ENCODE measurements at regions of chr1 and their contacts with region 1.

Region 1: DNA sequence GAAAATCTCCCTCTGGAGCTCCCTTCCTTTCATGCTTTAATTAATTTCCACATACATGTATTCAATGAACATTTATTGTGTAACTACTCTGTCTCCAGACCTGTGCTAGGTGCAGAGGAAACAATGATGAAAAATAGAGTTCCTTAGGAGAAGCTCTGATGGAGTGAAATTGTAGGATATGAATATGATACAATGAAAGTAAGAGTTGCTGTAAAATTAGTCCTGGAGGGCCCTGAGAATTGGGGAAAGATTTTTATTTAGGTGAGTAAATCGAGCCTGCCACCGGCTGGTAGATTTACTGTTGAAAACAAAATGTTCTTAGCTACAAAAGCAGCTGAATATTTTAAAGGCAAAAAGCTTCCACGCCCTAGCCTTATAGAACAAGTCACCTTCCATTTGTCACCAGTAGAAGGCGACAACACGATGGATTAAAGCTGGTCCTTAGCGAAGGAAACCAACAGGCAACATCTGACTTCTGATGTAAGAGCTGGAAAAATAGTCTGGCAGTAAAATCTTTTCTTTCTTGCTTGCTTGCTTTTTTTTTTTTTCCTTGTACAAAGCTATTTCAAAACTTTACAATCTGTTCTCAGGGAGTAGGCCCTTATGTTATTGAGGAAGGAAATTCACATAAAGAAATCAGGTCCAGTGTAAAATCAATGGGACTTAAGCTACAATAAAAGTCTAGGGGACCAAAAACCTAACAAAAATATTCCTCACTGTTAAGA is 82.0 kb upstream of the ROR1 start:
- DNase-seq: peak; percentile 60
- CTCF ChIP-seq: peak; percentile 79

Region 2: GRCh38 chr1:63659448-63659847 is 32.4 kb before region 1 on chr1:
- CTCF ChIA-PET with region 1: interaction called, 11 read pairs
- POLR2A ChIA-PET with region 1: no interaction called
- DNase-seq: no peak
- CTCF ChIP-seq: no peak

Region 3: DNA sequence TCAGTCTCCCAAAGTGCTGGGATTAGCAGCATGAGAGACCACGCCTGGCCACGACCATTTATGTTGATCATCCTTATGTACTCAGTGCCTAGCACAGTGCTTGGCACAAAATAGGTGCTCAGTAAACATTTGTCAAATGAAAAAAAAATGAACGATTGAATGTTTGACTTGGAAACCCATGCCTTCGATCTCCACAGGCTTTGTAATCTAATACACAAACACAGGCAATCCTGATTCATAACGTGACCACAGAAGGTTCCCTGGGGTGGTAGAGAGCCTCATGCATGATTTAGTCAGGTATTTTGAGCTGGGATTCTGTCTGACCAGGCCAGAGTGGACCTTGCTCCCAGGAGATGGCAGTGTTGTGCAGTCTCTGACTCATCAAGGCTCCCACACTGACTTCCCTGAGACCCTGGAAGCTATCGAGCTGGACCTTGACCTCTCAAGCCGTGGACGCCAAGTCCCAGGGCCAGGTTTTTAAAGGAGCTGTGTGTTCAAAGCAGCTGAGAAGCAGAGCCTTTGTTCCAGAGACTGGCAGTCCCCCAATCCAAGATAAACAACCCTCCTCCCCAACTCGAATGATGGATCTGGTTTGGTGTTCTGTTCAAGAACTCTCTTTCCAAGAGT is 17.5 kb before region 1 on chr1:
- CTCF ChIA-PET with region 1: interaction called, 15 read pairs
- POLR2A ChIA-PET with region 1: no interaction called
- DNase-seq: peak; percentile 54
- CTCF ChIP-seq: peak; percentile 61

Region 4: DNA sequence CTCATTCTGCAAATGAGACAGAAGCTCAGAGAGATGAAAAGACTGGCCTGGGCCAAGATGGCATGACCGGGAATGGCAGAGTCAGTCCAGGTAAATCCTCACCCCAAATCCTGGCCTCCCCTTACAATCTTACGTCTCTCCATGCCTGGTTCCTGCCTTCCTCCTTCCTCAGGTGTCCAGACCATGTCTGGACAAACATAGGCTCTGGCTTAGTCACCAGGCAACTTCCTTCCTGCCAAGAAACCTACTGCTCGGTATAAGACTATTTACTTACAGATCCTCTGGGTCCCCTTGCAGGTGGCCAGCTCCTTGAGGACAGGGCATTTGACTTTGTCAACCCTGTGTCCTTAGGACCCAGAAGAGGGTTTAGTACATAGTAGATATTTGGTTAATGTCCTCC is 12.6 kb after region 1 on chr1:
- CTCF ChIA-PET with region 1: interaction called, 14 read pairs
- POLR2A ChIA-PET with region 1: no interaction called
- DNase-seq: no peak
- CTCF ChIP-seq: no peak

Region 5: DNA sequence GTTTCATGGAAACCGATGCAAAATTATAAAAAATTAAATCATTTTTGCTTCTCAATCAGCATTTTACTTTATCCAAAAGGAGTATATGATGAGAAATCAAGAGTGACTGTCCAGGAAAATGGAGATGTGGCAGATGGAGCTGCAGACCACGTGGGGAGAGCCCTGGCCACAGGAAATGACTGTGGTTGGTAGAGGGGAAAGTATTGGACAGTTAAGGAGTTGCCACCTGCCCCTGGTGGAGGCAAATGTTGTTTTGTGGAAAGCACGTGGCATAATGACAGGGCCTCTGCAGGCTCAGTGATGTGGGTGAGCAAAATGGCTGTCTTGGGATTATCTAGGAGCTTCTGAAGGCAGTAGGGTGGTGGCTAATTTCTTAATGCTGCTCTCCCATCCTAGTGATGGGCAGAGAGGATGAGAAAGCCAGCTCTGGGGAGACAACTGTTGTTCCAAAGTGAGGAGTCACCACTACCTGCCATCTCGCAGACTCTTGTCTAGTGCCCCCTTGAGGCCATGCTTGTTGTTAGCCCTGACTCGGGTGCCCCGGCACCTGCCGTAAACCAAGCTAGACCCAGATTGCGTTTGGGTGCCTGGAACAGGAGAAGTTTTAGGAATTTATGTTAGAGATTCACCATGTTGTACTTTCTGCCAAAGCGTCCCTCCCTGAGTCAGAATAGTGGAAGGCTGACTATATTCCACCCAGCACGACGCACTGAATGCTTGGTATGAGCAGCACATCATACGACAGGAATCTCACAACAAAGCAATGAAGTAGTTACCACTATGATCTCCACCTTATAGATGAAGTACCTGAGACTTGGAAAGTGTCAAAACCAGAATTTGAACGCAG is 225.9 kb after region 1 on chr1:
- CTCF ChIA-PET with region 1: interaction called, 21 read pairs
- POLR2A ChIA-PET with region 1: no interaction called
- DNase-seq: no peak
- CTCF ChIP-seq: no peak

Region 6: DNA sequence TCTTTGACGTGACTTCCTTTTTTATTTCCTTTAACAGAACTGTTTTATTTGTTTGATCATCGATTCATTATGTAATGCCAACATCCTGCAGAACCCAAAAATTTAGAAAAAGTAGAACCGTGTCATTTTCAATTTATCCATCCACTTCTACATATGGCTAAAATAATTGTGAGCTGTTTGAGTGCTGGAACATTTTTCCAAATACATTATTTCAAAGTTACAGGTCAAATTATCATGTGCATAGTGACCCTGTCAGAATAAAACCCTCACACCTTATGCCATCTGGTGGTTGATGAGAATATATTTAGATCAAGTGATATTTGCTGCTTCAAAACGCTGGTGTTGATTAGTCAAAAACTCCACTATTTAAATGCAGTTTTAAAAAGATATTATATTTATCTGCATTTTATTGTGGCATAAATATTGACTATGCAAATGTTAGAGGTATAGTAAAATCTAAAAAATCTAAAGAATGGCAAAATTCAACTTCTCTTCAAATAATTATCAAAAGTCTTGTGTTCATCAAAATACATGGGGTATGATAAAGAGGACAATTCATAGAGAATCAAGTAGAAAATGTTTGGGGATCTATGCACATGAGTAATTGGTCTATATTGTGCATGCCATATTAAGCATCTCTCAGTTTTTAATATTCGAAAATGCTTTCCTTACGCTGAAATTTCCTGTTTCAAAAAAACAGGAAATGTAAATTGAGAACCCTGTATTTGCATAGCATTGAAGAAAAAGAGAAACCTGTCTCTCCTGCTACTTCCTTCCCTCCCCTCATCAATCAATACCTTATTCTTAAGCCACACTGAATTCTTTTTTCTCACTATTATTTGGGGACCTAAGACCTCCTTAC is 551.3 kb after region 1 on chr1:
- CTCF ChIA-PET with region 1: interaction called, 16 read pairs
- POLR2A ChIA-PET with region 1: no interaction called
- DNase-seq: no peak
- CTCF ChIP-seq: no peak

Measured in GM10248 (cell line).